Activated CD4-positive, alpha-beta memory T cell treated with anti-CD3 and anti-CD28 coated beads for 36 hours (primary cell): ENCODE measurements at regions of chr17 and their contacts with region 1.

Region 1: DNA sequence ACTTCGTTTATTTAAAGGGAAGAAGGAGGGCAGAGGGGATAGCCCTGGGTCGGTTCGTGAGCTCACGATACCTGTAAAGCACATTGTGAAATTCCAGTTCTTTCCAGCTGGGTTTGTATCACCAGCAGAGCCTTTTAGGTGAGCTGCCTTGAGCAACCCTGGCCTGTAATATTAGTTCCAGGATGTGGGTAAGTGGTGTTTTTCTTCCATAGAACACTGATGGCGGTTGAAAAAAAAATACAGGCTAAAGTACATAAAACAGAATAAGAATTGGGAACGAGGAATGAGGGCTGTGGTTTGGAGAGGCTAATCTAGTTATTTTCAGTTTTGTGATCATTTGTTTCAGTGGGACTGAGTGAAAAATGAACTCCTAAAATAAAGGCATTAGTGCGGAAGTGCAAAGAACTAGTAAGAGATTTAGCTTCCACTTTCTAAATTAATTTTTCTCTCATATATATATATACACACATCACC is 20.6 kb downstream of the HS3ST3B1 start:
- DNase-seq: no peak
- H3K4me3 Mint-ChIP-seq: peak overlapping the region; percentile 11
- H3K27ac Mint-ChIP-seq: peak overlapping the region; percentile 66
- H3K4me1 Mint-ChIP-seq: peaks cover 80% of the 10 kb centered on the region
- H3K27me3 Mint-ChIP-seq: no peaks in the 10 kb centered on the region

Region 2: GRCh38 chr17:14222620-14223019 is 98.9 kb before region 1 on chr17:
- CTCF ChIA-PET with region 1: no interaction called
- POLR2A ChIA-PET with region 1: no interaction called
- intact Hi-C with region 1: no loop called
- DNase-seq: no peak
- H3K4me3 Mint-ChIP-seq: no peak overlapping the region
- H3K27ac Mint-ChIP-seq: no peak overlapping the region
- H3K4me1 Mint-ChIP-seq: no peaks in the 10 kb centered on the region
- H3K27me3 Mint-ChIP-seq: no peaks in the 10 kb centered on the region

Region 3: DNA sequence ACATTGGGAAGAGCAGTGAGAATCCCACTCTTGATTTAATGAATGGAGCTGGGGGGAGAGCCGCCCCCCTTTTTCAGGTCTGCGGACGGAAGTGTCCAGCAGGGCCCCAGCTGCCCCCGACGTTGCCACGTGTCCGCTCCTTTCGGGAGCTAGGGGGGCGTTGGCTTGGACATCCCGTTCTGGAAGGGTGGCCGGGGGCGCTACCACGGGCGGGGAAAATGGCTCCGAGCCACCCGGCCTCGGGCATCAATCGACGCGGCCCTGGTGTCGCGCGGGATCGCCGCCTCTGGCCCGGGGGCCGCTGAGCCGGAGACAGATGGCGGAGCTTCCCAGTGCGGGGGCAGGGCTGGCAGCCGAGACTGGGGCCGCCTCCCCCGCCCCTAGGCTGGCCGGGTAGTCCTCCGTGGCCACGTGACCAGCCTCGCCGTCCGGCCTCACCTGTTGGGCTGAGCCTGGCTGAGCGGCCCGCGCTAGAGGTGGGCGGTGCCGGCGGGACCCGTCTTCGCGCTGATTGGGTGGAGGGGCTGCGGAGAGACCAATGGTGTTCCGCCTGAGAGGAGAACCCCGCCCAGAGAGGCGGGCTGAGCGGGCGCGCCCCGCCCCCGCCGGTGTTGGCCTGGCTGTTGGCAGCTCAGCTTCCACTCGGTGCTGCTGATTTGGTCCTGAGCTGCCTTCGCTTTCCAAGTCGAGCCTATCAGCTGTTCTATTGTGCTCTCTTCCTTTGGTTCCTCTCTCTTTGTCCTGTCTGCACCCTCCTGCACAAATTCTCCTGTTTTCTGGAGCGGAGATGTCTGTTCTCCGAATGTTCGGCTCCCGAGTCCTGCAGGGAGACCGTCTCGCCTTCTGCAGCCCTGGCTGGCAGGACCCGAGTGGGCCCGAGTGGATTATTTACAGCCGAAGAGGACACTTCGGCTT is 12.3 kb before region 1 on chr17:
- CTCF ChIA-PET with region 1: interaction called, 4 read pairs
- POLR2A ChIA-PET with region 1: interaction called, 6 read pairs
- intact Hi-C with region 1: loop called (anchors 1 kb)
- DNase-seq: peak; percentile 96
- H3K4me3 Mint-ChIP-seq: peak overlapping the region; percentile 77
- H3K27ac Mint-ChIP-seq: peak overlapping the region; percentile 69
- H3K4me1 Mint-ChIP-seq: peaks cover 76% of the 10 kb centered on the region
- H3K27me3 Mint-ChIP-seq: no peaks in the 10 kb centered on the region

Region 4: GRCh38 chr17:14451729-14452191 is 130.2 kb after region 1 on chr17:
- CTCF ChIA-PET with region 1: no interaction called
- POLR2A ChIA-PET with region 1: no interaction called
- intact Hi-C with region 1: no loop called
- DNase-seq: no peak
- H3K4me3 Mint-ChIP-seq: no peak overlapping the region
- H3K27ac Mint-ChIP-seq: no peak overlapping the region
- H3K4me1 Mint-ChIP-seq: no peaks in the 10 kb centered on the region
- H3K27me3 Mint-ChIP-seq: no peaks in the 10 kb centered on the region